Endothelial cell of umbilical vein (primary cell): ENCODE measurements at regions of chr15 and their contacts with region 1.

Region 1: DNA sequence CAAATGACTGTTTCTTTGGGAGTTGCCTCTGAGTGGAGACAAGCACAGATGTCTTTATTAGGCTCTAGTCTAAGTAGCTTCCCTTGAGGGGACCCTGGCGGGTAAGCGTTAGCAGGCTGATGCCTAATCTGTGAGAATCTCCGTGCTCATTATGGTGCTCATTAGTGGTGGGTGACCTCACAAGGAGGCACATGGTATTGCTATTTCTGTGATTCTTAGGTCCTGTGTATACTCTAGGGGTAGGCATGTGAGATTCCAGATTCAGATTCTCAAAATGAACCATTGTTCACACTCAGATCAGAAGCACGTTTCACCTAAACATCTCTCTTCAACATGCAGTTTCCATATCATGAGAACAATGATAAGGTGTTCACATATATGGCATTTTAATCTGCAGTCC is 809.7 kb downstream of the NR2F2 start:
- DNase-seq: no peak
- H3K4me3 ChIP-seq: no peak overlapping the region
- H3K27ac ChIP-seq: no peak overlapping the region
- H3K4me1 ChIP-seq: no peaks in the 10 kb centered on the region
- H3K27me3 ChIP-seq: no peaks in the 10 kb centered on the region
- CTCF ChIP-seq: no peak
- POLR2A ChIP-seq: no peak

Region 2: DNA sequence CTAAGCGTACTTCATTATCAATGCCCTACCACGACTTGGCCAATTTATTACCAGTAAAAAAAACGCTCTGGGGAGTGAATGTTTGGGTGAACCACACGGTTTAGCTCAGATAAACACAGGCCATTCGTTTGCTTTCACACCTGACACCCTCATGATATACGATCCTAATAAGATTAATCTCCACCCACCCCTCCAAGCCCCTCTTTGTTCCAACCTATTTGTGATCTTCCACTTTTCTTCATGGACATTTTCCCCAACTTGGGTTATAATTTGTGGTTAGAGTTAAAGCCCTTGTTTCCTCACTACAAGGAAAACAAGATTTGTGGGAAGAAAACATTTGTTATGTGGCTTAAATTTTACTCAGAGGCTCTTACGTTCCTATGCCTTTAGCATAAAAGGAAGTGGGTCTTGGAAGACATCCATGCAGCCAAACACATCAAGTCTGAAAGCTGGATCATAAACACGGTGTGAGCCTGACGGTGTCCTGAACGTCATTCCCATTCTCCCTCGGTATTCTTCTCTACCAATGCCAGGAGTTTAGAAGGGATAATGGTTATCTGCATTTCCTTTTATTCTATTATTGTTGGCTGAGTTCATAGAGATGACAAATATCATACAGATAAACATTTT is 290.8 kb before region 1 on chr15:
- CTCF ChIA-PET with region 1: no interaction called
- POLR2A ChIA-PET with region 1: no interaction called
- dilution Hi-C with region 1: no loop called
- intact Hi-C with region 1: loop called (anchors 1 kb)
- DNase-seq: peak; percentile 42
- H3K4me3 ChIP-seq: no peak overlapping the region
- H3K27ac ChIP-seq: no peak overlapping the region
- H3K4me1 ChIP-seq: peaks cover 9% of the 10 kb centered on the region
- H3K27me3 ChIP-seq: no peaks in the 10 kb centered on the region
- CTCF ChIP-seq: no peak
- POLR2A ChIP-seq: no peak